GM12878 (cell line): ENCODE measurements at regions of chr2 and their contacts with region 1.

Region 1: GRCh38 chr2:218269899-218270720 is at the starts of genes AAMP and PNKD:
- DNase-seq: peak; percentile 96
- ATAC-seq: peak; percentile 92
- H3K4me3 ChIP-seq: peak within 1 kb of the TSS; percentile 90
- H3K27ac ChIP-seq: peak within 1 kb of the TSS; percentile 74
- H3K4me1 ChIP-seq: peaks cover 18% of the 10 kb centered on the region
- H3K27me3 ChIP-seq: no peaks in the 10 kb centered on the region
- CTCF ChIP-seq: peak in 2 of 3 experiments; percentile 10 to 33; a peak in 2 of 6 replicates
- EP300 ChIP-seq: no peak
- POLR2A ChIP-seq: peak; percentile 89
- RAD21 ChIP-seq: no peak
- polyA plus RNA-seq, gene AAMP: 4.4 to 5.5 TPM
- polyA plus RNA-seq, gene PNKD: 72.6 to 104 TPM

Region 2: DNA sequence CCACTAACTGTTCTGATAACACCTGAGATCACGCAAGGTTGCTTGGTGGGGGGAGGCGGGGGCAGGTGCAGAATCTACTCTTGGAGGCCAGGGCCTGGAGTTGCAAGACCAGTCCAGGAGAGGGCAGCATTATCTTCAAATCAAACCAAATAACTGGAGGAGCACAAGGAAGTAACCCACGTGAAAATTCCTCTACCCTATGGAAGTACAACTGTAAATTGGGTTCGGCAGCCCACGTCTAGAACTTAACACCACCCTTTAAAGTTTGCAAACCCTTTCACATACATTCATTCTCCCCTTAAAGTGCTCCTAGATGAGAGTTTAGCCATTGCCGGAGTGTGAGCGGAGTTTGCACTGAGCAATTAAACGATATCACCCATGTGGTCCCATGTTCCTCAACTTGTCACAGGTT is 83.7 kb before region 1 on chr2:
- CTCF ChIA-PET with region 1: interaction called, 10 read pairs
- POLR2A ChIA-PET with region 1: interaction called, 3 read pairs
- RAD21 ChIA-PET with region 1: interaction called, 3 read pairs
- SMC1A ChIA-PET with region 1: interaction called, 5 read pairs
- in situ Hi-C with region 1: no loop called
- intact Hi-C with region 1: loop called (anchors 5 kb)
- DNase-seq: peak; percentile 25
- ATAC-seq: peak; percentile 96
- H3K4me3 ChIP-seq: no peak overlapping the region
- H3K27ac ChIP-seq: no peak overlapping the region
- H3K4me1 ChIP-seq: no peaks in the 10 kb centered on the region
- H3K27me3 ChIP-seq: peaks cover 0 to 1% of the 10 kb centered on the region in 2 experiments; a peak in 3 of 4 replicates
- CTCF ChIP-seq: peak; percentile 82 to 86 (median 85)
- EP300 ChIP-seq: no peak
- POLR2A ChIP-seq: no peak
- RAD21 ChIP-seq: peak; percentile 78

Region 3: GRCh38 chr2:218286570-218287459 is 16.7 kb after region 1 on chr2:
- CTCF ChIA-PET with region 1: interaction called, 154 read pairs
- POLR2A ChIA-PET with region 1: interaction called, 84 read pairs
- RAD21 ChIA-PET with region 1: interaction called, 141 read pairs
- SMC1A ChIA-PET with region 1: interaction called, 194 read pairs
- in situ Hi-C with region 1: no loop called
- intact Hi-C with region 1: loop called (anchors 1 kb)
- DNase-seq: peak; percentile 72
- ATAC-seq: peak; percentile 76
- H3K4me3 ChIP-seq: peak overlapping the region; percentile 64
- H3K27ac ChIP-seq: peak overlapping the region; percentile 95
- H3K4me1 ChIP-seq: peaks cover 55% of the 10 kb centered on the region
- H3K27me3 ChIP-seq: no peaks in the 10 kb centered on the region
- CTCF ChIP-seq: no peak
- EP300 ChIP-seq: no peak
- POLR2A ChIP-seq: peak; percentile 57; the same call in 1 of the 2 replicates
- RAD21 ChIP-seq: no peak

Region 4: GRCh38 chr2:218301176-218301819 is 31.2 kb after region 1 on chr2:
- CTCF ChIA-PET with region 1: interaction called, 150 read pairs
- POLR2A ChIA-PET with region 1: interaction called, 5 read pairs
- RAD21 ChIA-PET with region 1: interaction called, 9 read pairs
- SMC1A ChIA-PET with region 1: interaction called, 45 read pairs
- in situ Hi-C with region 1: no loop called
- intact Hi-C with region 1: no loop called
- DNase-seq: peak; percentile 82
- ATAC-seq: peak; percentile 97
- H3K4me3 ChIP-seq: no peak overlapping the region
- H3K27ac ChIP-seq: no peak overlapping the region
- H3K4me1 ChIP-seq: no peaks in the 10 kb centered on the region
- H3K27me3 ChIP-seq: no peaks in the 10 kb centered on the region
- CTCF ChIP-seq: peak; percentile 90 to 93 (median 92)
- EP300 ChIP-seq: no peak
- POLR2A ChIP-seq: no peak
- RAD21 ChIP-seq: peak; percentile 97

Region 5: GRCh38 chr2:218360447-218360846 is 90.3 kb after region 1 on chr2:
- CTCF ChIA-PET with region 1: interaction called, 62 read pairs
- POLR2A ChIA-PET with region 1: no interaction called
- RAD21 ChIA-PET with region 1: interaction called, 16 read pairs
- SMC1A ChIA-PET with region 1: interaction called, 13 read pairs
- in situ Hi-C with region 1: no loop called
- intact Hi-C with region 1: loop called (anchors 1 kb)
- DNase-seq: no peak
- ATAC-seq: no peak
- H3K4me3 ChIP-seq: no peak overlapping the region
- H3K27ac ChIP-seq: no peak overlapping the region
- H3K4me1 ChIP-seq: peaks cover 7% of the 10 kb centered on the region
- H3K27me3 ChIP-seq: no peaks in the 10 kb centered on the region
- CTCF ChIP-seq: no peak
- EP300 ChIP-seq: no peak
- POLR2A ChIP-seq: no peak
- RAD21 ChIP-seq: no peak

Region 6: DNA sequence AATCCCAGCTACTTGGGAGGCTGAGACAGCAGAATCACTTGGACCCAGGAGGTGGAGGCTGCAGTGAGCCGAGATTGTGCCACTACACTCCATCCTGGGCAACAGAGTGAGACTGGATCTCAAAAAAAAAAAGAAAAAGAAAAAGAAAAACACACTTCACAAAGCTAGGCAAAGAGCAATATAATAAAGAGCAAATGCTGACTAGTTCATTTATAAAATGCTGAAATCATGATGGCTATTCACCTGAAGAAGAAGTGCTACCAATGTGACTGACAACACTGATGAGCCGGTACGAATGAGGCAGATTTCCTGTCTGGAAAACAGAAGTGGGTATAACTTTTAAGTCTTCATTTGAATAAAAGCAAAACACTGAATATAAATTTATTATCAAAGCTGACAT is 186.7 kb after region 1 on chr2:
- CTCF ChIA-PET with region 1: no interaction called
- POLR2A ChIA-PET with region 1: no interaction called
- RAD21 ChIA-PET with region 1: no interaction called
- SMC1A ChIA-PET with region 1: no interaction called
- in situ Hi-C with region 1: no loop called
- intact Hi-C with region 1: no loop called
- DNase-seq: no peak
- ATAC-seq: no peak
- H3K4me3 ChIP-seq: no peak overlapping the region
- H3K27ac ChIP-seq: no peak overlapping the region
- H3K4me1 ChIP-seq: no peaks in the 10 kb centered on the region
- H3K27me3 ChIP-seq: no peaks in the 10 kb centered on the region
- CTCF ChIP-seq: no peak
- EP300 ChIP-seq: no peak
- POLR2A ChIP-seq: no peak
- RAD21 ChIP-seq: no peak

Region 7: GRCh38 chr2:218568190-218569037 is 298.3 kb after region 1 on chr2 and contains the starts of genes CNOT9 and USP37:
- CTCF ChIA-PET with region 1: no interaction called
- POLR2A ChIA-PET with region 1: no interaction called
- RAD21 ChIA-PET with region 1: interaction called, 3 read pairs
- SMC1A ChIA-PET with region 1: interaction called, 3 read pairs
- in situ Hi-C with region 1: no loop called
- intact Hi-C with region 1: loop called (anchors 5 kb)
- DNase-seq: peak; percentile 94
- ATAC-seq: peak; percentile 84
- H3K4me3 ChIP-seq: peak within 1 kb of the TSS; percentile 95
- H3K27ac ChIP-seq: peak within 1 kb of the TSS; percentile 98
- H3K4me1 ChIP-seq: peaks cover 8% of the 10 kb centered on the region; the same call in 1 of the 2 replicates
- H3K27me3 ChIP-seq: no peaks in the 10 kb centered on the region
- CTCF ChIP-seq: no peak
- EP300 ChIP-seq: no peak
- POLR2A ChIP-seq: peak; percentile 88
- RAD21 ChIP-seq: no peak
- polyA plus RNA-seq, gene CNOT9: 51.0 to 58.5 TPM
- polyA plus RNA-seq, gene USP37: 2.8 to 4.1 TPM